GM12878 (cell line): ENCODE measurements at regions of chrX and their contacts with region 1.

Region 1: DNA sequence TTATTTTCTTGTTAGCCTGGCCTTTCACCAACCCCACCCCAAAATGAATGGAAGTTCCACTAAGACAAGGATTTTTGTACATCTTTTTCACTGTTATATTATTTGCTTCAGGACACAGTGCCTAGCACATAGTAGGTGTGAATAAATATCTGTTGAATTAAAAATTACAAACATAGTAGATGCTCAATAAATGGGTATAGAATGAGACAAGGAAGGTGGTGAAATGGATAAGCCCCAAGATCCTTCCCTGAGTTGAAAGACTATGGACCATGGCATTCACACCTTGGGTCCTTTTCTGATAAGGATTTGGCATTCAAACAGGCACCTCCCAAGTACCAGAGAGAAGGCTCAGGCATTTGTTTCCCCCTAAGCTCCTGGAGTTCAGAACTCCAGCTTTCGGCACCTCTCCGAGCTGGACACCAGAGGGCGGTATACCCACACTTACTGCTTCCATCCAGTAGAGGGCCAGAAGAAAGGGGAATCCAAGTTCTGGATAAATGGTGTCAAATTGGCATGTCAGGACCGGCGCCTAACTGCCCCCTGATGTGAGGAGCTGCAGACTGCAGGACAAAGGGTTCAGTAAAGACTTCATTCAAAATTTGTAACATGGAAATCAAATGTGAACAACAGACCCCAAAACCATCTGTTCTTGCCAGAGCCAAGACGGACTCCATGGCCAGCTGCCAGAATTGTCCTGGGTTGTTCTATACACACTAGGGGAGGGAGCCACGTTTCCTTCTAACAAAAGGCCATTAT is 193.0 kb downstream of the GPC3 start:
- DNase-seq: peak; percentile 15
- ATAC-seq: peak; percentile 94
- H3K4me3 ChIP-seq: no peak overlapping the region
- H3K27ac ChIP-seq: no peak overlapping the region
- H3K4me1 ChIP-seq: no peaks in the 10 kb centered on the region
- H3K27me3 ChIP-seq: no peaks in the 10 kb centered on the region
- CTCF ChIP-seq: peak; percentile 99; a peak in 5 of 6 replicates
- EP300 ChIP-seq: no peak
- POLR2A ChIP-seq: no peak
- RAD21 ChIP-seq: peak; percentile 90

Region 2: DNA sequence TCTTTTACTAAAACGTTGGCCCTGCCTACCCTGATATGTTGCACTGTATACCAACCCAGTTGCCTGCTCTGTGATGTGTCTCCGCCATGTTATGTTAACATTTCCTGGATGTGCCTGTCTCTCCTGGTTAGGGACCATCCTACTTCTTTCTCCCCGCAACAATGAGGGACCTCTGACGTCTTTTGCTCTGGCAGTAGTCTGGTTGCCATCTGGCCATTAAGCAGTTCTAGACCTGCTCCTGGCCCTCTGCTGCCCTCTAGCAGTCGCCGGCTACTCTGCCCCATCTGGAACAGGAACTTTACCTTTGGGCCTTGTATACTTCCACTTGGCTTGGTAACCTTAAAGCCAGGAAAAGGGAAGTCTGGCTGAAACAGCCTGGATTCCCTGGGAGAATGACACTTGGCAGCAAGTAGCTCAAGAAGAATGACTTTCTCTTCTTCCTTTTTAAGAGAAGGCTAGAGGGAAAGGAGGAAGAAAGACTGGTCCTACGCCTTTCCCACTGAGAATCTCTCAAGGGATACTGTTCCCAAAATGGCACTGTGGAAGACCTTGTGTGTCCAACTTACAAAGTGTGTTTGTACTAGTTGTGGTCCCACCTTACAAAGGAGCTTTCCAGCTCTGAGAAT is 129.5 kb after region 1 on chrX:
- CTCF ChIA-PET with region 1: interaction called, 77 read pairs
- POLR2A ChIA-PET with region 1: no interaction called
- RAD21 ChIA-PET with region 1: interaction called, 29 read pairs
- SMC1A ChIA-PET with region 1: interaction called, 34 read pairs
- in situ Hi-C with region 1: no loop called
- intact Hi-C with region 1: loop called (anchors 1 kb)
- DNase-seq: no peak
- ATAC-seq: peak; percentile 89
- H3K4me3 ChIP-seq: no peak overlapping the region
- H3K27ac ChIP-seq: no peak overlapping the region
- H3K4me1 ChIP-seq: no peaks in the 10 kb centered on the region
- H3K27me3 ChIP-seq: no peaks in the 10 kb centered on the region
- CTCF ChIP-seq: peak; percentile 59 to 75 (median 68)
- EP300 ChIP-seq: no peak
- POLR2A ChIP-seq: no peak
- RAD21 ChIP-seq: peak; percentile 60

Region 3: DNA sequence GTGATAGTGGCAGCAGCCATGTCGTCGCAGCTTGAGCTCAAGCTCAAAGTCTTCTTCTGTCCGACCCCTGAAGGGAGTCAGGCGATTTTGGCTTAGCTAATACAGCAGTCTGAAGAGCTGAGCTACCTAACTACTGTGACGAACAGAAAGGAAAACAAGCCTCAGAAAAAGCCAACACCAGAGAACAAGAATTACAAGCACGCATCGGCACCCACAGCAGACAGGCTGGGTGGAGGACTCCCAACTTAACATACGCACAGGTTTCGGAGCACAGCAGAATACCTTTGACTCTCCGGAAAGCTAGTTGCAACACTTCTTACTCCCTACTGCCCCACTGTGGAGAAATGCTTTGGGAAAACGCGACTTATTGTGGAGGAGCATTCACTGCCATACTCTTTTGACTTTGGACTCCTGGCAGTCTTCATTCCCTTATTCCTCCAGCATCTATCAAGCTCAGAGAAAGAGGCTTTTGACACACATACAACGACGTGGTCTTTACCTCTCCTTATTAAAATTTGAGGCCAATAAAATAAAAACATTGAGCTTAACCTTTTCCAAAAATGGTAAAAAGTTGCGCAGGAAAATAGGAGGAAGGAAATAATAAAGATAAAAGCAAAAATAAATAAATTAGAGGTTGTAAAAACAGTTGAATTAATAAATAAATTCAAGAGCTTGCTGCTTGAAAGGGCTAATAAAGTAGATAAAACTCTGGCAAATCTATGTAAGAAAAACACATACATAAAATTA is 234.4 kb after region 1 on chrX:
- CTCF ChIA-PET with region 1: interaction called, 25 read pairs
- POLR2A ChIA-PET with region 1: no interaction called
- RAD21 ChIA-PET with region 1: interaction called, 13 read pairs
- SMC1A ChIA-PET with region 1: interaction called, 11 read pairs
- in situ Hi-C with region 1: no loop called
- intact Hi-C with region 1: loop called (anchors 1 kb)
- DNase-seq: no peak
- ATAC-seq: peak; percentile 53
- H3K4me3 ChIP-seq: no peak overlapping the region
- H3K27ac ChIP-seq: no peak overlapping the region
- H3K4me1 ChIP-seq: no peaks in the 10 kb centered on the region
- H3K27me3 ChIP-seq: no peaks in the 10 kb centered on the region; a peak in 1 of 4 replicates
- CTCF ChIP-seq: peak; percentile 29 to 38 (median 32); a peak in 3 of 6 replicates
- EP300 ChIP-seq: no peak
- POLR2A ChIP-seq: no peak
- RAD21 ChIP-seq: no peak

Region 4: DNA sequence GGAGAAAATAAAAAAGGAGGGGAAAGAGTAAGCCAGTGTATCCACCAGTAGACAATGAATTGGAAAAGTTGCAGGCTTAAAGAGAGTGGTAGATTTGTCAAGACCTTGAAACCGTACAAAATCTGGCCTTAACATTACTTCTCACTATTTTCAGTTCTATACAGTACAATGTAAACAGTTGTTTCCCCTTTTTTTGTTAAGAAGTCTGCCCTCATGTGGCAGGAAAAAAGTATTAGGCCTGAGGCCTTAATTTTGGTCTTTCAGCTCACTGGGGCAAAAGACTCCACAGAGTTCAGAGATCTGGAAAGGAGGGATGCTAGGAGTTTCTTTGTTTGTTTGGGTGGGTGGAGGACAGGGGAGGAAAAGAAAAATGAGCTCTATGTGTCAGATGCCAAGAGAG is 351.9 kb after region 1 on chrX:
- CTCF ChIA-PET with region 1: interaction called, 25 read pairs
- POLR2A ChIA-PET with region 1: no interaction called
- RAD21 ChIA-PET with region 1: interaction called, 11 read pairs
- SMC1A ChIA-PET with region 1: interaction called, 9 read pairs
- in situ Hi-C with region 1: no loop called
- intact Hi-C with region 1: loop called (anchors 2 kb)
- DNase-seq: no peak
- ATAC-seq: peak; percentile 84
- H3K4me3 ChIP-seq: no peak overlapping the region
- H3K27ac ChIP-seq: no peak overlapping the region
- H3K4me1 ChIP-seq: no peaks in the 10 kb centered on the region
- H3K27me3 ChIP-seq: no peaks in the 10 kb centered on the region
- CTCF ChIP-seq: peak; percentile 45 to 57 (median 53); a peak in 5 of 6 replicates
- EP300 ChIP-seq: no peak
- POLR2A ChIP-seq: no peak
- RAD21 ChIP-seq: peak; percentile 32; the same call in 1 of the 2 replicates

Region 5: DNA sequence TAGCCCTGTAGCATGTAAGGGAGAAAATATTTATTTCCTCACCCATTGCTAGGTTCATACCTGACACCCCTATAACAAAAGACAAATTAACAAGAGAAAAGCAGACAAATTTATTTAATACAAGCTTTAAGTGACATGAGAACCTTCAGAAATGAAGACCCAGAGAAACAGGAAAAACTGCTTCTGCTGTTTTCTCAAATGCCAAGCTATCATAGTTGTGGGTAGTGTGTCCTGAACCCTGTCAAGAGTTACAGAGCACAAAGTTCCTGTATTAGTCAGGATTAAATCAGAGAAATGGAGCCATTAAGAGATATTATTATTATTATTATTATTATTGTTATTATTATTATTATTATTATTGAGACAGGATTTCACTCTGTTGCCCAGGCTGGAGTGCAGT is 462.1 kb after region 1 on chrX:
- CTCF ChIA-PET with region 1: interaction called, 11 read pairs
- POLR2A ChIA-PET with region 1: no interaction called
- RAD21 ChIA-PET with region 1: no interaction called
- SMC1A ChIA-PET with region 1: interaction called, 5 read pairs
- in situ Hi-C with region 1: no loop called
- intact Hi-C with region 1: loop called (anchors 2 kb)
- DNase-seq: no peak
- ATAC-seq: no peak
- H3K4me3 ChIP-seq: no peak overlapping the region
- H3K27ac ChIP-seq: no peak overlapping the region
- H3K4me1 ChIP-seq: no peaks in the 10 kb centered on the region
- H3K27me3 ChIP-seq: no peaks in the 10 kb centered on the region
- CTCF ChIP-seq: no peak
- EP300 ChIP-seq: no peak
- POLR2A ChIP-seq: no peak
- RAD21 ChIP-seq: no peak